ENCODE measurements at regions of chr6 and their contacts with region 1.

Region 1: GRCh38 chr6:42482174-42482573 is 30.4 kb upstream of the TRERF1 start:
- DNase-seq: no peak
- ATAC-seq: no peak
- H3K4me3 ChIP-seq: no peak overlapping the region
- H3K4me3 Mint-ChIP-seq: no peak overlapping the region
- H3K27ac ChIP-seq: no peak overlapping the region
- H3K27ac Mint-ChIP-seq: no peak overlapping the region
- H3K4me1 ChIP-seq: no peaks in the 10 kb centered on the region
- H3K4me1 Mint-ChIP-seq: no peaks in the 10 kb centered on the region
- H3K27me3 ChIP-seq: no peaks in the 10 kb centered on the region
- H3K27me3 Mint-ChIP-seq: no peaks in the 10 kb centered on the region
- CTCF ChIP-seq: no peak

Region 2: DNA sequence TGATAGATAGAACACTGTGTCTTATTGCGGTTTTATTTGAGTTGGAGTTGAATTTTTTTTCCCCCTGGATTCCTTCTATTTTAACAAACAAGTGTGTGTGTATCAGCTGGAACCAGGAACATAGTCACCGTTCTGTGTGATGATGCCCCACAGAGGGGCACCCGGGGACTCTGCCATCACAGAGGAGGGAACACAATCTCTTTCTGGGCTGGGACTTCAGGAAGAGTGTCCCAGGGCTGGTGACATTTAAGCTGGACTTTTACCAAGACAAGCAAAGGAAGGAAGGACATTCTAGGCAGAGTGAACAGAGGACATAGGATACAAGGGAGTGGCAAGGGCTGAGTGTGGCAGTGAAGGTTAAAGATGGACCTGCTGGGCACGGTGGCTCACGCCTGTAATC is 398.6 kb before region 1 on chr6:
- CTCF ChIA-PET with region 1: no interaction called
- POLR2A ChIA-PET with region 1: interaction called, 10 read pairs
- intact Hi-C with region 1: no loop called
- DNase-seq: no peak
- ATAC-seq: no peak
- H3K4me3 ChIP-seq: no peak overlapping the region
- H3K4me3 Mint-ChIP-seq: no peak overlapping the region
- H3K27ac ChIP-seq: no peak overlapping the region
- H3K27ac Mint-ChIP-seq: no peak overlapping the region
- H3K4me1 ChIP-seq: no peaks in the 10 kb centered on the region
- H3K4me1 Mint-ChIP-seq: peaks cover 5% of the 10 kb centered on the region
- H3K27me3 ChIP-seq: no peaks in the 10 kb centered on the region
- H3K27me3 Mint-ChIP-seq: no peaks in the 10 kb centered on the region
- CTCF ChIP-seq: no peak

Measured in B cell (primary cell).